Sciatic nerve (tissue), 2 donors: ENCODE measurements at regions of chr6 and their contacts with region 1.

Region 1: GRCh38 chr6:33248925-33249731 is 22.5 kb downstream of the VPS52 start:
- DNase-seq: peak; percentile 97
- ATAC-seq: peak; percentile 97

Region 2: GRCh38 chr6:33123732-33124524 is 125.2 kb before region 1 on chr6:
- intact Hi-C with region 1: loop called (anchors 5 kb)
- DNase-seq: no peak
- ATAC-seq: no peak

Region 3: GRCh38 chr6:33192671-33193602 is 56.2 kb before region 1 on chr6:
- intact Hi-C with region 1: no loop called
- DNase-seq: peak; percentile 77
- ATAC-seq: peak; percentile 50